Right ventricle myocardium inferior (tissue), 1 donor: ENCODE measurements at regions of chr9 and their contacts with region 1.

Region 1: DNA sequence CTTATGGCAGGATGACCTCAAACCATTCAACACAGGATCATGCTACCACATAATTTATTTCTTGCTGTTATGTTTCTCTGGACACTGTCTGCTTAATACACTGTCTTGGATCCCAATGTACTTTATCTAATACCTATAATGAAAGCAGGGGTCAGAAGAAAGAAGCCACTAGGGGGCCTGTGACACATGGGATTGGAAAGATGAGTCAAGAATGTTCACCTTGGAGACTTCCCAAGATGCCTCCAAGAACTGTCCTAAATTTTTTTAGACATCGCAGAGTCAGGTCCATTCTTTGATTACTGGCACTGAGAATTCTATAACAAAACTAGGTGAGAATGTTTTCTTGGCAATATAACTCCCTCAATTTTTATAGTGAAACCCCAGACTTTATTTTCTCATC is 305.8 kb upstream of the SMARCA2 start:
- DNase-seq: no peak
- ATAC-seq: no peak

Region 2: GRCh38 chr9:2087500-2088313 is 378.4 kb after region 1 on chr9:
- intact Hi-C with region 1: loop called (anchors 5 kb)
- DNase-seq: no peak
- ATAC-seq: no peak